Activated T-helper 1 cell treated with anti-CD3 and anti-CD28 coated beads, Interleukin-12 subunit alpha, Interleukin-12 subunit beta, Interleukin-2, Interleukin-4 antibody, amounts not matched to agents 30 ng/mL and 10 ng/mL and 1 ng/mL, durations not matched to agents 14 hours and 24 hours and 36 hours (primary cell): ENCODE measurements at regions of chr1 and their contacts with region 1.

Region 1: DNA sequence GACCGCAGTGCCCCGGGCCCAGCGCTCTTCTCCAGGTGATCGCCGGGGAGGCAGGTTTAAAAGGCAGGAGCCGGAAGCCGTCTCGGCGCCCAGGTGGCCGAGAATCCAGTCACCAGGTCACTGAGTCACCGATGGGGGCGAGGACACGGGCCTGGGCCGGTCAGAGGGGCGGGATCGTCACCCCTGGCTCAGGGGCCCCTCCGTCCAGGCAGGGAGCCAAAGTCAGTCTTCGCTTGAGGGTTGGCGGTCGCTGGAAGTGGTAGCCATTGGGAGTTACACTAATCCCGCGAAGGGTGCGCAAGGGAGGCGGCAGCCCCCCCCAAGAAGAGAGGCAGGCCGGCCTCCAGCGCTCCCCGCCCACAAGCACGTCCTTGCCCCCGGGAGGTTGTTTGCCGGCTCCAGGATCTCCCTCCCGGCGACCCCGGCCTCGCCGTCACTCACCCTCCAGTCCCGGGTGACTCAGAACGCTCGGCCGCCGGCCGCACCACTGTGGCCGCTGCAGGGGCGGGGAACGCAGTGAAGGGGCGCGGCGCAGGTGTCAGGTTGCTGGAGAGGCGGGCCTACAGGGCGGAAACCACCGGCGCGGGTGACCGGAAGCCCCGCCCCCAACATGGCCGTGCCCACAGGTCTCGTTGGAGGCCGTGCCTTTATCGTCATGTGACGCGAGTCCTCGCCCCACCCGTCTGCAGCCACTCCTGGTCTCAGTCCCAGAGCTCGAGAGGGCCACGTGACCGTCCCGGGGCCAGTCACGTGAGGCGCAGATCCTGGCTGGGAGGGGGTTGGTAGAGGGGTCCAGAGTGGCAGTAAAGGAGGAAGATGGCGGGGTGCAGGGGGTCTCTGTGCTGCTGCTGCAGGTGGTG is at the starts of genes CLCN6 and MTHFR:
- DNase-seq: peak; percentile 99
- H3K4me3 Mint-ChIP-seq: peak within 1 kb of the TSS; percentile 99
- H3K27ac Mint-ChIP-seq: peak within 1 kb of the TSS; percentile 98
- H3K4me1 Mint-ChIP-seq: peaks cover 66% of the 10 kb centered on the region
- H3K27me3 Mint-ChIP-seq: peaks cover 2% of the 10 kb centered on the region
- total RNA-seq, gene CLCN6: 11.2 and 14.3 TPM in 2 replicates
- total RNA-seq, gene MTHFR: 18.1 and 21.4 TPM in 2 replicates

Region 2: DNA sequence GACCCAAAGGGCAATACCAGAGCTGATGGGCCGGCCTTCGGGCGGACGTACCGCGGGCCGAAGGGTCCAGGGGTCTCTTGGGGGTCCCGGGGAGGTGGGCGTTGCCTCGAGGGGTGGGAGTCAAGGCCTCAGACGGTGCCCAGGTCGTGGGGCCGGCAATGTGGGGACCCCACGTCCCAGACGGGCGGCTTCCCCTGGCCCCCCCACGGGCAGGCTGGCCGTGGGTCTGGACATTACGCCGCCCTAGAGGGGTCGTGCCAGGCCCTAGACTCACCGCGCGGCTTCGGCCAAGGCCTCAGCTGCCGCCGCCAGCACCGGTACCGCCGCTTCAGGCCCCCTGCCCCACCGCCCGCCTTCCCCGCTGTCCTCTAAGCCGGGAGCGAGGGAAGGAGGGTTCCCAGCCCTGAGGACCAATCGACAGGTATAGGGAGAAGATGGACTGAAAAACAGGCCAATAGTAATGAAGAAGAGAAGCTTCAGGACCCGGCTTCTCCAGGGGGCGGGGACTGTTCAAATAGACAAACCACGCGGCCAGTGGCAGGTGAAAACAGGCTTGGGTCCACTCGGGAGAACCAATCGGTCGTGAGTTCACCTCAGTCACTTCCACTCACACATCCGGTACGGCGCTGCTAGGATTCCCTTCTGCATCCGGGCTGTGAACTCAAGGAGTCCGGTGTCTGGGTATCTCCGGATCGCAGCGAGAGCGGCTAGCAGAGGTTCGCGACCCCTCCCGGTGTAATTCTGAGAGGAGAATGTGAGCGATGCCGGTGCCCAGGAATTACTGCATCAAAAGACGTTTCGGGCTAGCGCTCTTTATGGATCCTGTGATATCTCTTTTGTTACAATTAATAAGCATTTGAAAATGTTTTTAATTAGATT is 543.3 kb before region 1 on chr1 and contains the start of gene MTOR:
- intact Hi-C with region 1: loop called (anchors 2 kb)
- DNase-seq: peak; percentile 97
- H3K4me3 Mint-ChIP-seq: peak within 1 kb of the TSS; percentile 97
- H3K27ac Mint-ChIP-seq: peak within 1 kb of the TSS; percentile 82
- H3K4me1 Mint-ChIP-seq: peaks cover 11% of the 10 kb centered on the region
- H3K27me3 Mint-ChIP-seq: peaks cover 3% of the 10 kb centered on the region
- total RNA-seq, gene MTOR: 48.7 and 49.4 TPM in 2 replicates

Region 3: GRCh38 chr1:11645670-11646265 is 159.9 kb before region 1 on chr1:
- intact Hi-C with region 1: loop called (anchors 5 kb)
- DNase-seq: peak; percentile 63
- H3K4me3 Mint-ChIP-seq: no peak overlapping the region
- H3K27ac Mint-ChIP-seq: no peak overlapping the region
- H3K4me1 Mint-ChIP-seq: peaks cover 9% of the 10 kb centered on the region
- H3K27me3 Mint-ChIP-seq: peaks cover 7% of the 10 kb centered on the region

Region 4: DNA sequence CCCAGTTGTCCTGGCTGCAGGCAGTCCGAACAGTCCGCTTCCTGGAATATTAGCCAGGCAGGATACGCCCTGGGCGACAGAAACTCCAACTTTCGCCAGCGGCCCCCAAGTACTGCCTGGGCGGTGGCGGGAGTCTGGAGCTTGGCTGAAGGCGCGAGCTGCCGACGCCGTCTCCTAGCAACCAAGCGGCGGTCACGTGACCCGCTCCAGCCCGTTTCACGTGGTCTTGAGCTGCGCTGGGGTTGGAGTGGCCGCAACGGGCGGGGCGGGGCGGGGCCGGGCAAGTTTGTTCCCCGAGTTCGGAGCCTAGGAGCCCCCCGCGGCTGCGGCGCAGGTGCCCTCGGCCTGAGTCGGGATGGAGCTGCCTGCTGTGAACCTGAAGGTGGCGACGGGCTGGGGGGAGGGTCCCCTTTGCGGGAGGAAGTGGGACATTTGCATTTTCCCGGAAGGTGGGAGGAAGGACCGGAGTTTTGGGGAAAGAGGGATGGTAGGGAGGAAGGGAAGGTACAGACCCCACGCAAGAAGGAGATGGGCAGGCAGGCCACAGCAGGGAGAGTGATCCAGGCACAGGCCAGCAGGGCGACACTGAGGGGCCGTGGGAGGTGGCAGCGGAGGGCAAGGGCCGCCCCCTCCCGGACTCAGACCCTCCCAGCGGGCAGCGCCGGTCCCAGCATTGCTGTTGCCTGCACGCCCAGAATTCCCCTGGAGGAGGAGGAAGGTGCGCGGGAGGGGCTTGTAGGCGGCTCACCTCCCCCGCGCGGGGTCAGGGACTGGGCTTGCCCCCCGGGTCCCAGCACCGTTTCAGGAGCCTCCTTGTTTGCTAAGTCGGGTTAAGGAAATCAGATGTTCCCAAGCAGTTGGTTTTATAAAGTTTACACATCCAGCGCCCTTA is 69.6 kb before region 1 on chr1 and contains the start of gene AGTRAP:
- intact Hi-C with region 1: loop called (anchors 1 kb)
- DNase-seq: peak; percentile 84
- H3K4me3 Mint-ChIP-seq: peak within 1 kb of the TSS; percentile 96
- H3K27ac Mint-ChIP-seq: peak within 1 kb of the TSS; percentile 88
- H3K4me1 Mint-ChIP-seq: peaks cover 67% of the 10 kb centered on the region
- H3K27me3 Mint-ChIP-seq: no peaks in the 10 kb centered on the region
- total RNA-seq, gene AGTRAP: 13.8 and 15.9 TPM in 2 replicates

Region 5: DNA sequence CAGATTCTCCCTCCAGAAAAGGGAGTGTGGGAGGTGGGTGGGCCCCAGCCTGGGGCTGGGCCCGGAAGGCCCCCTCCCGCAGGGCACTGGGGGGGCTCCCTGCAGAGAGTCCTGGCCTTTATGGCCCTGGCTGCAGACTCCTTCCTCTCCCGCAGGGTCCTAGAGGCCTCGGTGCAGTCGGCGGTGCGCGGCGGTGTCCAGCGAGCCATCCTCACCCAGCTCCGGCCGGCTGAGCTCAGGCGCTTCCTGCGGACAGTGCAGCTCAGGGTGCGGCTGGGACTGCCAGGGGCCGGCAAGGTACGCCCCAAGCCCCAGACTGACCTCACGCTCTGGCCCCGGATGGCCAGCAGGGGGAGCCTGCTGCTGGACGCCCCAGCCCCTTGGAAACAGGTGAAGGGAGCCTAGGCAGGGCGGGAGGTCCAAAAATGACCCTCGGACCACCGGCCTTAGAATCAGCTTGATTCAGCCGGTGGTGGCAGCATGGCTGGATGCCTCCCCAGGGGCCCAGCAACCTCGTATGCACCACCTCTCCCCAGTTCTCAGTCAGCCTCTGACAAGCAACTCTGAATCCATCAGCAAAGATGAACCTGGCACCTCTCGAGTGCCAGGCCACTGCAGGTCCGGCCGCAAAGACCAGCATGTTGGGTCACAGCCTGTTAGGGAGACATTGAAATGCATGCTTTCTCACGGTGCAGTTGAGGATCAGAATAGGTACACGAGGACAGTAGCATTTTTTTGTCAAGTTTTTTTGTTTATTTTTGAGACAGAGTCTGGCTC is 20.5 kb before region 1 on chr1:
- intact Hi-C with region 1: loop called (anchors 1 kb)
- DNase-seq: peak; percentile 21
- H3K4me3 Mint-ChIP-seq: no peak overlapping the region
- H3K27ac Mint-ChIP-seq: no peak overlapping the region
- H3K4me1 Mint-ChIP-seq: no peaks in the 10 kb centered on the region
- H3K27me3 Mint-ChIP-seq: no peaks in the 10 kb centered on the region

Region 6: GRCh38 chr1:11934302-11935056 is 128.8 kb after region 1 on chr1 and contains the start of gene PLOD1:
- intact Hi-C with region 1: loop called (anchors 1 kb)
- DNase-seq: peak; percentile 78
- H3K4me3 Mint-ChIP-seq: peak within 1 kb of the TSS; percentile 82
- H3K27ac Mint-ChIP-seq: peak within 1 kb of the TSS; percentile 58
- H3K4me1 Mint-ChIP-seq: peaks cover 9% of the 10 kb centered on the region
- H3K27me3 Mint-ChIP-seq: peaks cover 2% of the 10 kb centered on the region
- total RNA-seq, gene PLOD1: 32.3 and 37.8 TPM in 2 replicates